Mammary epithelial cell (primary cell): ENCODE measurements at regions of chr1 and their contacts with region 1.

Region 1: GRCh38 chr1:224851210-224851847 is 78.1 kb upstream of the DNAH14 start:
- DNase-seq: peak; percentile 44
- H3K4me3 ChIP-seq: no peak overlapping the region
- H3K27ac ChIP-seq: no peak overlapping the region
- H3K4me1 ChIP-seq: no peaks in the 10 kb centered on the region
- H3K27me3 ChIP-seq: no peaks in the 10 kb centered on the region
- CTCF ChIP-seq: peak; percentile 87 to 91

Region 2: DNA sequence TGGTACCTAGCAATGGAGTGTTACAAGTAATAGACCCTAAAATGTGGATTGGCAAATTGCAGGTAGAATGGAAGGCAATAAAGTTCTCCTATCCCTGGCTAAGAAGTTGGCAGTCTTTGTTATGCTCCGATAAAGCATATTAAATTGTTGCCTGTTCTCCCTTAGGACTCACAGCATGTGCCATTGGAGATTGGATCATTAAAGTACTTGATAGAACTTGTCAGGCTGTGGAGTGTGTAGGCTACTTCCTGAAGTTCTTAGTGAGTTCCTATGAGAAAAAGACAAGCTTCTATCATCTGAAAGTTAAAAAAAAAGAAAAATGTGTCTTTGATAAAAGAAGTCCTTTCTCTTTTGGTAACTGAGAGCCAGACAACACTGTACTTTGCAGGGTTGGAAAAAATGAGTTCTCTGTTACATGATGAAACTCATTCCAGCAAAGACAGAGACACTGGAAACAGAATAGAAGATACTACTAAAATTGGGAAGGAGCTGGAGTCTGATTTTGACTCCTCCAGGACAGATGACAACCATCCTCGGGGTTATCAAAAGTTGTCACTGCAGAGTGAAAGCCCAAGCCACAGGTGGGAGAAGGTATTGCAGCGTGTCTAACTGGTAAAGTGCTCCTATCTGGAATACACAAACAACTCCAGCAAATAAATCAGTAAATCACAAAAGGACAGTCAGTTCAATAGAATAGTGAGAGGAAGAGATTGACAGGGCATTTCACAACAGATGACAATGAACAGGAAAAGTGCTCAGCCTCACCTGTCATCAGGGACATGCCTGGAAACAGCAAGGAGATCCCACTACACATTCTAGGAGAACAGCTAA is 329.2 kb before region 1 on chr1:
- CTCF ChIA-PET with region 1: no interaction called
- dilution Hi-C with region 1: no loop called
- in situ Hi-C with region 1: loop called in 1 of 2 experiments (anchors 5 kb)
- intact Hi-C with region 1: no loop called
- DNase-seq: no peak
- H3K4me3 ChIP-seq: no peak overlapping the region
- H3K27ac ChIP-seq: no peak overlapping the region
- H3K4me1 ChIP-seq: peaks cover 37% of the 10 kb centered on the region
- H3K27me3 ChIP-seq: no peaks in the 10 kb centered on the region
- CTCF ChIP-seq: peak; percentile 33 to 35

Region 3: DNA sequence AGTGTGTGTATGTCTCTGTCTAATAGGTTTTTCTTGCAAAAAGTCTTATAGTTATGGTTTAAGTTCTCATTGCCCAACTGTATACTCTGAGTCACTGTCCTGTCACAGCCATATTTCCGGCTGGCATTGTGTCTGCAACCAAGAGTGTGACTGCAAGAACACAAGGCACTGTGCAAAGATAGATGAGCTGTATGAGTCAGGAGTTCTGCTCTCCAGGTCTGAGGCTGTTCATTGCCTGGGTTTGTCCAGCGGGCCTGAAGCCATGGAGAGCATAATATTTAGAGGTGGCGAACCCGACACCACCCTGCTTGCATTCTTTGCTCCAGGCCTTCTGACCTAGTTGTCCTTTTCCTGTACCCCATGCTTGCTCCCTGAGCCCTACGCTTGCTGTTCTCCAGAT is 286.1 kb before region 1 on chr1:
- CTCF ChIA-PET with region 1: no interaction called
- dilution Hi-C with region 1: no loop called
- in situ Hi-C with region 1: no loop called
- intact Hi-C with region 1: loop called (anchors 1 kb)
- DNase-seq: peak; percentile 95
- H3K4me3 ChIP-seq: no peak overlapping the region
- H3K27ac ChIP-seq: peak overlapping the region; percentile 93
- H3K4me1 ChIP-seq: peaks cover 45% of the 10 kb centered on the region
- H3K27me3 ChIP-seq: no peaks in the 10 kb centered on the region
- CTCF ChIP-seq: no peak

Region 4: DNA sequence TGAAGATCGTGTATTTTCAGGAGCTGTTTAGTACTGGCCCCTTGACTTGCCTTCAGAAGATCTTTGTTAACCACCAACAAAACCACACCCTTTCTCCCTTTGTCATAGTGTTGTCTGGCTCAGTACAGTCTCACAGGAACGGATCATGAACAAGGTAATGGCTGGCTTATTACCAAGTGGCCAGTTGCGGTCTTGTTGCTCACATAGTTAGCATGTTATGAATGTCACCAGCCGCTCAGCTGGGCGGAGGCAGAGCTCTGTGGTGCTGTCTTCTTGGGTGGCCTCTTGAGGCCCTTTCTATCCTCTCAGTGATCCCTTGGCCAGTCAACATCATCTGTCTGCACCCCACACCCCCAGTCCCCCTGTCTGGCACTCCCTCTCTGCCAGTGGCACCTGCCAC is 213.8 kb before region 1 on chr1:
- CTCF ChIA-PET with region 1: no interaction called
- dilution Hi-C with region 1: no loop called
- in situ Hi-C with region 1: loop called in 1 of 2 experiments (anchors 10 kb)
- intact Hi-C with region 1: no loop called
- DNase-seq: peak; percentile 82
- H3K4me3 ChIP-seq: no peak overlapping the region
- H3K27ac ChIP-seq: no peak overlapping the region
- H3K4me1 ChIP-seq: peaks cover 5% of the 10 kb centered on the region
- H3K27me3 ChIP-seq: no peaks in the 10 kb centered on the region
- CTCF ChIP-seq: no peak

Region 5: GRCh38 chr1:224644553-224645154 is 206.7 kb before region 1 on chr1:
- CTCF ChIA-PET with region 1: no interaction called
- dilution Hi-C with region 1: no loop called
- in situ Hi-C with region 1: loop called in 1 of 2 experiments (anchors 10 kb)
- intact Hi-C with region 1: loop called (anchors 1 kb)
- DNase-seq: peak; percentile 48
- H3K4me3 ChIP-seq: no peak overlapping the region
- H3K27ac ChIP-seq: no peak overlapping the region
- H3K4me1 ChIP-seq: no peaks in the 10 kb centered on the region
- H3K27me3 ChIP-seq: no peaks in the 10 kb centered on the region
- CTCF ChIP-seq: peak; percentile 93 to 95

Region 6: GRCh38 chr1:224700915-224701531 is 150.3 kb before region 1 on chr1:
- CTCF ChIA-PET with region 1: interaction called, 3 read pairs
- dilution Hi-C with region 1: no loop called
- in situ Hi-C with region 1: no loop called
- intact Hi-C with region 1: loop called (anchors 1 kb)
- DNase-seq: no peak
- H3K4me3 ChIP-seq: no peak overlapping the region
- H3K27ac ChIP-seq: no peak overlapping the region
- H3K4me1 ChIP-seq: no peaks in the 10 kb centered on the region
- H3K27me3 ChIP-seq: no peaks in the 10 kb centered on the region
- CTCF ChIP-seq: peak; percentile 35 to 55